Activated B cell treated with CpG ODN at 0.5 μM for 24 hours (primary cell): ENCODE measurements at regions of chr12 and their contacts with region 1.

Region 1: GRCh38 chr12:132445884-132446632 is 43.9 kb upstream of the FBRSL1 start:
- DNase-seq: no peak
- ATAC-seq: peak; percentile 9
- H3K4me3 Mint-ChIP-seq: peak overlapping the region; percentile 66
- H3K27ac Mint-ChIP-seq: peak overlapping the region; percentile 98
- H3K4me1 Mint-ChIP-seq: peaks cover 63% of the 10 kb centered on the region
- H3K27me3 Mint-ChIP-seq: no peaks in the 10 kb centered on the region
- CTCF ChIP-seq: no peak

Region 2: DNA sequence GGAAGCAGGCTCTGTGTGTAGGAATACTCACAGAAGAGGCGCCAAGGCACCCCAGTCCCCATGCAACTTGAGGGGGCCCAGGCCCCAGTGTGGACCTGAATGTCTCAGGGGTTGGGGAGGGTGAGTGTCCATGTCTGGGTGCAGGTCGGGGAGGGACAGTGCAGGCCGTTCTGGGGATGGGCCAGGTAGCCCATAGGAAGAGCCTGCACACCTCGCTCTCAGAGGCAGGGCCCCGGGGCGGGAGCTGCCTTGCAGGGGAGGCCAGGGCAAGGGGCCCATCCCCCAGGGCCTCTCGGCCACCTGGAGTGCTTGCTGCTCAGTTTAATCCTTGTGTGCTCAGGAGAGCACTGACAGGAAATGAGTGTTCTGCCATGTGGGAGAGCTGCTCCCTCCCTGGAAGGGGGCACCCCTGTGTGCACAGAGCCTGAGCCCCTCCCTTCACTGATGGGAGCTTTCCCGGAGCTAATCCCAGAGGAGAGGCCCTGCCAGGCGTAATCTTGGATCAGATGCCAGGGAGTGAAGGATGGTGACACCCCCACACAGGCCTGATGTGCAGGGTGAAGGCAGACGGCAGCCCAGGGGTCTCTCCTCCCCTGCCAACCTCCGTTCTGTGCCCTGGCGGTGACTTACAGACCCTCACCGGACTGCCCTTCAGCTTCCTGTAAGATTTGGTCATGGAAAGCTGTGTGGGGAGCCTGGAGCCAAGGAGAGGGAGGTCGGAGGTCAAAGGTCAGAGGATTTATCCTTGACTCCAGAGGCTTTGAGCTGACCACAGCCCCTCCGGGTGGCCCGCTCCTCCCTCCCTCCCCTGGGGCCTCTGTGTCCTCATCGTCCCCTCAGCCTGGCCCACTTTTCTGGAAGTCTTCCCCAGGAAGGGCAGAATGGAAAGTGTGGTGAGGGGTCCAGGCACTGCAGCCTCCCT is 19.5 kb after region 1 on chr12:
- CTCF ChIA-PET with region 1: interaction called, 3 read pairs
- POLR2A ChIA-PET with region 1: interaction called, 5 read pairs
- intact Hi-C with region 1: loop called (anchors 1 kb)
- DNase-seq: no peak
- ATAC-seq: no peak
- H3K4me3 Mint-ChIP-seq: no peak overlapping the region
- H3K27ac Mint-ChIP-seq: no peak overlapping the region
- H3K4me1 Mint-ChIP-seq: peaks cover 47% of the 10 kb centered on the region
- H3K27me3 Mint-ChIP-seq: no peaks in the 10 kb centered on the region
- CTCF ChIP-seq: no peak

Region 3: GRCh38 chr12:132560614-132561426 is 114.8 kb after region 1 on chr12:
- CTCF ChIA-PET with region 1: no interaction called
- POLR2A ChIA-PET with region 1: no interaction called
- intact Hi-C with region 1: no loop called
- DNase-seq: peak; percentile 75
- ATAC-seq: peak; percentile 69
- H3K4me3 Mint-ChIP-seq: peak overlapping the region; percentile 77
- H3K27ac Mint-ChIP-seq: no peak overlapping the region
- H3K4me1 Mint-ChIP-seq: peaks cover 21% of the 10 kb centered on the region
- H3K27me3 Mint-ChIP-seq: no peaks in the 10 kb centered on the region
- CTCF ChIP-seq: peak; percentile 35

Region 4: DNA sequence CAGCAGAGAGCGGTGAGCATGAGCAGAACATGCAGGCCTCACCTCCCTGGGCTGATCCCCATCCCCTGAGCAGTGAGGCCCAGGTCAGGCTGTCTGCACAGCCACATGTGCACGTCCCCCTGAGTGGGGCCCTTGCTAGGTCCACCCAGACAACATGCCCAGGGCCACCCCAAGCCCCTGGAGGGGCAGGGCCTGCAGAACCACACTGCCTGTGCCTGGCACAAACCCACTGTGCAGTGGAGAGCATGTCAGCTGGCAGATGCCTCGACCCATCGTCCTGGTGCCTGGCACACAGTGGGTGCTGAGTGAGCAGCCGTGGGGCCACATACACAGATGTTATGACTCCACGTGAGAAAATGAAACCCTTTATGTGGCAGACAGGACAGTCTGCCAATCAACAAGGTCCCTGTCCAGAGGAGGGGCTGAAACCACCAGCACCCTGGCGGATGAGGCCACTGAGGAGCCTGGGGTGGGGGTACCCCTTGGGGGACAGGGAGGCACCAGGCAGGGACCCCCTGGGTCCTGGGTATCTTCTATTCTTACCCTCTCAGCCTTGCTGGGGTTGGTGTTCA is 781.3 kb after region 1 on chr12:
- CTCF ChIA-PET with region 1: no interaction called
- POLR2A ChIA-PET with region 1: no interaction called
- intact Hi-C with region 1: no loop called
- DNase-seq: no peak
- ATAC-seq: no peak
- H3K4me3 Mint-ChIP-seq: no peak overlapping the region
- H3K27ac Mint-ChIP-seq: no peak overlapping the region
- H3K4me1 Mint-ChIP-seq: no peaks in the 10 kb centered on the region
- H3K27me3 Mint-ChIP-seq: no peaks in the 10 kb centered on the region
- CTCF ChIP-seq: no peak